ENCODE measurements at regions of chr2 and their contacts with region 1.

Region 1: GRCh38 chr2:208175069-208175839 is 11.9 kb upstream of the CRYGA start:
- DNase-seq: peak; percentile 63 to 67
- ATAC-seq: peak; percentile 80 to 98 (median 94)
- H3K4me3 ChIP-seq: no peak overlapping the region
- H3K27ac ChIP-seq: no peak overlapping the region
- H3K4me1 ChIP-seq: no peaks in the 10 kb centered on the region
- H3K27me3 ChIP-seq: no peaks in the 10 kb centered on the region
- CTCF ChIP-seq: peak; percentile 79

Region 2: GRCh38 chr2:208254871-208255556 is 79.8 kb after region 1 on chr2 and contains the start of gene IDH1:
- intact Hi-C with region 1: loop called in 1 of 2 experiments (anchors 2 kb)
- DNase-seq: peak; percentile 97 to 98
- ATAC-seq: peak; percentile 97 to 98 (median 98)
- H3K4me3 ChIP-seq: peak within 1 kb of the TSS; percentile 81
- H3K27ac ChIP-seq: peak within 1 kb of the TSS; percentile 66
- H3K4me1 ChIP-seq: peaks cover 18% of the 10 kb centered on the region
- H3K27me3 ChIP-seq: no peaks in the 10 kb centered on the region
- CTCF ChIP-seq: no peak
- total RNA-seq, gene IDH1: 9.7 to 18.0 (median 13.3) TPM